ENCODE measurements at regions of chr20 and their contacts with region 1.

Region 1: DNA sequence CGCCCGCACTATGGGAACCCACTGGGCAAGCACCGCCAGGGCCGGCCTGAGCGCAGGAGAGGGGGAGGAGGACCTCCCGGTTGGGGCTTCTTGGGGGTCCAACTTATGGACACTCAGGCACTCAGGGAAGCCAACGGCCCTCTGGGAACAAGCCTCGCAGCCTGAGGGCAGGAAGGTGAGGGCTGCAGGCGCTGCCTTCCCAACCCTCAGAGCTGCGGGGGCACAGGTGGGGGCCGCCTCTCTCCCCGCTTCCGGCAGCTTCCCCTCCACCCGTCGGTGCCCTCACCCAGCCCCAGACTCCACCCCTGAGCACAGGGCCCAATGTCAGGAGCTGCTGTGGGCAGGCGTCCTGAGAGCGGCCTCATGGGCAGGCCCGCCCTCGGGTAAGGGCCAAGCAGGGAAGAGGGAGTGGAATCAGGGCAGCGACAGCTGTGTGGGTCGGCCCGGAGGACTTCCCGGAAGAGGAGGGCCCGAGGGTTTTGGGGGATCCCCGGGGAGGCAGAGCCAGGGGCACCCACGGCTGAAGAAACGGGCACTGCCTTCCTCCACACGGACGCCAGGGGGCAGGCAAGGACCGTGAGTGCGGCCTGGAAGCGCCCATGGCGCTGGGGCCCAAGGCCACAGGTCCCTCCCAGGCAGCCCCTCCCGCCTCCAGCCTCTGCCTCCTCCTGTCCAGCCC is 488 bp upstream of the PTK6 start:
- DNase-seq: peak; percentile 98
- ATAC-seq: peak; percentile 94
- H3K4me3 Mint-ChIP-seq: peak overlapping the region; percentile 51
- H3K27ac Mint-ChIP-seq: peak overlapping the region; percentile 83
- H3K4me1 Mint-ChIP-seq: peaks cover 16% of the 10 kb centered on the region
- H3K27me3 Mint-ChIP-seq: no peaks in the 10 kb centered on the region

Region 2: GRCh38 chr20:63495741-63496595 is 41.7 kb before region 1 on chr20:
- CTCF ChIA-PET with region 1: interaction called, 10 read pairs
- DNase-seq: peak; percentile 79
- ATAC-seq: peak; percentile 77
- H3K4me3 Mint-ChIP-seq: no peak overlapping the region
- H3K27ac Mint-ChIP-seq: no peak overlapping the region
- H3K4me1 Mint-ChIP-seq: no peaks in the 10 kb centered on the region
- H3K27me3 Mint-ChIP-seq: peaks cover 26% of the 10 kb centered on the region

Region 3: GRCh38 chr20:63553227-63553932 is 15.7 kb after region 1 on chr20:
- CTCF ChIA-PET with region 1: interaction called, 34 read pairs
- DNase-seq: peak; percentile 95
- ATAC-seq: peak; percentile 73
- H3K4me3 Mint-ChIP-seq: peak overlapping the region; percentile 38
- H3K27ac Mint-ChIP-seq: peak overlapping the region; percentile 86
- H3K4me1 Mint-ChIP-seq: peaks cover 14% of the 10 kb centered on the region
- H3K27me3 Mint-ChIP-seq: peaks cover 23% of the 10 kb centered on the region

Region 4: GRCh38 chr20:63574156-63574828 is 36.6 kb after region 1 on chr20 and contains the start of gene HELZ2:
- CTCF ChIA-PET with region 1: interaction called, 21 read pairs
- DNase-seq: peak; percentile 89
- ATAC-seq: peak; percentile 91
- H3K4me3 Mint-ChIP-seq: peak within 1 kb of the TSS; percentile 83
- H3K27ac Mint-ChIP-seq: peak within 1 kb of the TSS; percentile 89
- H3K4me1 Mint-ChIP-seq: peaks cover 9% of the 10 kb centered on the region
- H3K27me3 Mint-ChIP-seq: peaks cover 31% of the 10 kb centered on the region
- total RNA-seq, gene HELZ2: 139 to 285 TPM

Region 5: DNA sequence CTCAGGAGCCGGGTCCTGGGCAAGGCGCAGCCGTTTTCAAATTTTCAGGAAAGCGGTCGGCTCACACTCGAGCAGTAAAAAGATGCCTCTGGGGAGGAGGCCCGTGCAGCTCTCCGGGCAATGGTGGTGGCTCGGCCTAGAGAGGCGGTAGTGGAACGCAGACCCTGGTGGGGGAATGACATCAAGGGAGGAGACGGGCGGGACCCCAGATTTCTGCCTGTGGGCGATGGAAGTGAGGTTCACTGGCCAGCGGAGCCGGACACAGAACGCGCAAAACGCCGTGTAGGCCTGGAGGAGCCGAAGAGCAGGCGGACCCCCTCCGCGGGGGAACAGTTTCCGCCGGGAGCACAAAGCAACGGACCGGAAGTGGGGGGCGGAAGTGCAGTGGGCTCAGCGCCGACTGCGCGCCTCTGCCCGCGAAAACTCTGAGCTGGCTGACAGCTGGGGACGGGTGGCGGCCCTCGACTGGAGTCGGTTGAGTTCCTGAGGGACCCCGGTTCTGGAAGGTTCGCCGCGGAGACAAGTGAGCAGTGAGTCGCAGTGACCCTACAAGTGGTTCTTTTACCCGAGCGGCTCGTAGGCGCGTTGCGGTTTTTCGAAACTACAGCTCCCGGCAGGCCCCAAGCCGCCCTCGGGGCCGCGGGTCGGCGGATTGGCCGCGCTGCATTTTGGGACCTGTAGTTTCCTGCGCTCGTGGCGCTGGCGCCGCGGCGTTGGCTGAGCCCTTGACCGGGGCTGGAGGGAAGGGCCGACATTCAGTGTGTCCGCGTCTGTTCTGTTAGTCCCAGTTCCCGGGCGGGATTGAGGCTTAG is 120.5 kb after region 1 on chr20 and contains the start of gene RTEL1:
- CTCF ChIA-PET with region 1: interaction called, 10 read pairs
- DNase-seq: peak; percentile 92
- ATAC-seq: peak; percentile 89
- H3K4me3 Mint-ChIP-seq: peak within 1 kb of the TSS; percentile 95
- H3K27ac Mint-ChIP-seq: peak within 1 kb of the TSS; percentile 93
- H3K4me1 Mint-ChIP-seq: peaks cover 36% of the 10 kb centered on the region
- H3K27me3 Mint-ChIP-seq: no peaks in the 10 kb centered on the region
- total RNA-seq, gene RTEL1: 50.0 to 53.6 TPM

Region 6: GRCh38 chr20:63699466-63700198 is 162.0 kb after region 1 on chr20:
- CTCF ChIA-PET with region 1: no interaction called
- DNase-seq: no peak
- ATAC-seq: peak; percentile 27
- H3K4me3 Mint-ChIP-seq: no peak overlapping the region
- H3K27ac Mint-ChIP-seq: peak overlapping the region; percentile 40
- H3K4me1 Mint-ChIP-seq: peaks cover 30% of the 10 kb centered on the region
- H3K27me3 Mint-ChIP-seq: no peaks in the 10 kb centered on the region

Region 7: DNA sequence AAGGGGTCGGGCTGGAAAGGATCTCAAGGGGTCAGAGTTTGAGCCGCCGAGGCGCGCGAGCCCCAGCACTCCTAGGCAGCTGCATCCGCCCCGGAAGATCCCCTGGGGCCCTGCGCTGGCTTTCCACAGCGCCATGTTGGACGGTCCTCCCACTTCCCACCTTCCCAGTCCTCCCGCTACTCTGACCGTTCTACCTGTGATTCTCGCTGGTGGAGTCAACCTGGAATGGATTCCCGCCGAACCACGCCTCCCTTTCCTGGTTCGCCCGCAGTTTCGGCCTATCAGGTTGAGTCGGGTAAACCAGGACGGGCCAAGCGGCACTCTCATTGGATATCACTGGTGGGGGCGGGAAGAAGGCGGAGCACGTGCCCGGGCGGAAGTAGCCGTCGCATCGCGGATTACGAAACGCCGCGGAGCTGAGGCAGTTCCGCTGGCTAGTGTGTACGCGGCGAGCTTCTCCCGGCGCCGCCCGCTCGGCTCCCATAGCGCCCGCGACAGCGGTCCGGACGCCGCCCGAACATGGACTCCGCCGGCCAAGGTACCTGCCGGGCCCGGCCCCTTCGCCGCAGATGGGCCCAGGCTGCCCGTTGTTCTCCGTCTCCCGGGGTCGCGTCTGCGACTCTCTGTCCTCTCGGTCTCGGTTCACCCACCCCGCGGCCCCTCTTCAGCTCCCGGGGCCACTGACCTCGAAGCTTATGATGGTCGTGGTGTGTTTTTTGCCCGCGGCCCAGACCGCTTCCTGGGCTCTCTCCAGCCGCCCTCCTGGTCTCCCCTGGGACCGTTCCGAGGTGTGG is 327.4 kb after region 1 on chr20 and contains the start of gene TPD52L2:
- CTCF ChIA-PET with region 1: interaction called, 27 read pairs
- DNase-seq: peak; percentile 99
- ATAC-seq: peak; percentile 91
- H3K4me3 Mint-ChIP-seq: peak within 1 kb of the TSS; percentile 82
- H3K27ac Mint-ChIP-seq: peak within 1 kb of the TSS; percentile 84
- H3K4me1 Mint-ChIP-seq: peaks cover 24% of the 10 kb centered on the region
- H3K27me3 Mint-ChIP-seq: no peaks in the 10 kb centered on the region
- total RNA-seq, gene TPD52L2: 33.5 to 46.2 TPM

Measured in activated CD8-positive, alpha-beta memory T cell treated with anti-CD3 and anti-CD28 coated beads, Interleukin-2, amount 10 ng/mL, durations not matched to agents 7 days and 5 days (primary cell).